ENCODE measurements at regions of chr12 and their contacts with region 1.

Region 1: GRCh38 chr12:109888179-109889020 is 8.1 kb upstream of the GLTP start:
- DNase-seq: peak; percentile 96
- H3K4me3 ChIP-seq: no peak overlapping the region
- H3K27ac ChIP-seq: peak overlapping the region; percentile 71
- H3K4me1 ChIP-seq: peaks cover 26% of the 10 kb centered on the region
- H3K27me3 ChIP-seq: no peaks in the 10 kb centered on the region
- CTCF ChIP-seq: peak; percentile 11 to 31

Region 2: GRCh38 chr12:109861689-109862314 is 26.6 kb before region 1 on chr12:
- CTCF ChIA-PET with region 1: no interaction called
- dilution Hi-C with region 1: no loop called
- in situ Hi-C with region 1: no loop called
- intact Hi-C with region 1: no loop called
- DNase-seq: no peak
- H3K4me3 ChIP-seq: no peak overlapping the region
- H3K27ac ChIP-seq: no peak overlapping the region
- H3K4me1 ChIP-seq: peaks cover 18% of the 10 kb centered on the region
- H3K27me3 ChIP-seq: no peaks in the 10 kb centered on the region
- CTCF ChIP-seq: no peak

Region 3: GRCh38 chr12:109899783-109900751 is 11.7 kb after region 1 on chr12 and contains the start of gene TCHP:
- CTCF ChIA-PET with region 1: interaction called, 6 read pairs
- dilution Hi-C with region 1: no loop called
- in situ Hi-C with region 1: no loop called
- intact Hi-C with region 1: loop called (anchors 1 kb)
- DNase-seq: peak; percentile 85
- H3K4me3 ChIP-seq: peak within 1 kb of the TSS; percentile 45 to 70 (median 61)
- H3K27ac ChIP-seq: peak within 1 kb of the TSS; percentile 57
- H3K4me1 ChIP-seq: peaks cover 5% of the 10 kb centered on the region
- H3K27me3 ChIP-seq: no peaks in the 10 kb centered on the region
- CTCF ChIP-seq: peak; percentile 23 to 50
- total RNA-seq, gene TCHP: 4.0 to 19.4 TPM

Measured in mammary epithelial cell (primary cell).